Tibial artery (tissue), 4 donors: ENCODE measurements at regions of chr14 and their contacts with region 1.

Region 1: GRCh38 chr14:54010981-54011380 is 54.4 kb upstream of the BMP4 start:
- DNase-seq: no peak
- H3K4me3 ChIP-seq: no peak overlapping the region
- H3K27ac ChIP-seq: no peak overlapping the region
- H3K4me1 ChIP-seq: no peaks in the 10 kb centered on the region
- H3K27me3 ChIP-seq: no peaks in the 10 kb centered on the region
- CTCF ChIP-seq: no peak

Region 2: GRCh38 chr14:53767566-53767965 is 243.4 kb before region 1 on chr14:
- intact Hi-C with region 1: no loop called
- DNase-seq: no peak
- H3K4me3 ChIP-seq: no peak overlapping the region
- H3K27ac ChIP-seq: no peak overlapping the region
- H3K4me1 ChIP-seq: no peaks in the 10 kb centered on the region
- H3K27me3 ChIP-seq: no peaks in the 10 kb centered on the region
- CTCF ChIP-seq: no peak

Region 3: DNA sequence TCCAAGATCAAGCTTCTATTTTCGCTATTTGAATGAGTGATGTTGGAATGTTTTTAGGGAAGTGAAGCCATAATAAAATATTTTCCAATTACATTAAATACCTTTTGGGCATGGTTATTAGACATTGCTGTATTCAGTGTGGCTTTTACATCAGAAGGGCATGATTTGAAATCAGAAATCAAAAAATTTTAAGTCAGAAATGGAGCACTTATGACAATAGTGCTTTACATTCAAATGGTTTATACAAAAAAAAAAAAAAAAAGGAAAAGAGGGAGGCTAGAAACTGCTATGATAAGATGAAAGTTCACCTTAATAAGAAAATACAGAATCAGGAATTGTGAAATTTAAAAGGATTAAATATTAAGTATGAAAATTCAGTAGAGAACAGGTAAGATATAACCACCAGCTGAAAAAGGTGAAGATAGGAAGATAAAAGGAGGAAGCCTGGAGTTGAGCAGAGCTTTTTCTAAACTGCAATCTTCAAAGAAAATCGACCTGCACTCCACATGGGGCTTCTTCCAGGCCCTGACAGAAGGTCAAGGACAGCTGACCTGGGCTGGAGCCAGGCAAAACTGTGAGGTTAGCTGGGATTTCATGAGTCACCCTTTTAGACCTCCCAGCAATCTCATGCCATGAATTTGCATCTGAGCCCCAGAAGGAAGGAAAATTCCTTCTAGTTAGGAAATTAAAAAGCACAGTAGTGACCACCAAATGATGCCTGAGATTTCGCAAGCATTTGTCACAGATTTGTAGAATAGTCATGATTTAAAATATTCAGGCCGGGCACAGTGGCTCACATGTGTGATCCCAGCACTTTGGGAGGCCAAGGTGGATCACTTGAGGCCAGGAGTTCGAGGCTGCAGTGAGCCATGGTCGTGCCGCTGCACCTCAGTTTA is 31.0 kb before region 1 on chr14:
- intact Hi-C with region 1: loop called (anchors 5 kb)
- DNase-seq: peak in 1 of 2 donors; percentile 28
- H3K4me3 ChIP-seq: no peak overlapping the region
- H3K27ac ChIP-seq: no peak overlapping the region
- H3K4me1 ChIP-seq: no peaks in the 10 kb centered on the region
- H3K27me3 ChIP-seq: no peaks in the 10 kb centered on the region
- CTCF ChIP-seq: no peak

Region 4: DNA sequence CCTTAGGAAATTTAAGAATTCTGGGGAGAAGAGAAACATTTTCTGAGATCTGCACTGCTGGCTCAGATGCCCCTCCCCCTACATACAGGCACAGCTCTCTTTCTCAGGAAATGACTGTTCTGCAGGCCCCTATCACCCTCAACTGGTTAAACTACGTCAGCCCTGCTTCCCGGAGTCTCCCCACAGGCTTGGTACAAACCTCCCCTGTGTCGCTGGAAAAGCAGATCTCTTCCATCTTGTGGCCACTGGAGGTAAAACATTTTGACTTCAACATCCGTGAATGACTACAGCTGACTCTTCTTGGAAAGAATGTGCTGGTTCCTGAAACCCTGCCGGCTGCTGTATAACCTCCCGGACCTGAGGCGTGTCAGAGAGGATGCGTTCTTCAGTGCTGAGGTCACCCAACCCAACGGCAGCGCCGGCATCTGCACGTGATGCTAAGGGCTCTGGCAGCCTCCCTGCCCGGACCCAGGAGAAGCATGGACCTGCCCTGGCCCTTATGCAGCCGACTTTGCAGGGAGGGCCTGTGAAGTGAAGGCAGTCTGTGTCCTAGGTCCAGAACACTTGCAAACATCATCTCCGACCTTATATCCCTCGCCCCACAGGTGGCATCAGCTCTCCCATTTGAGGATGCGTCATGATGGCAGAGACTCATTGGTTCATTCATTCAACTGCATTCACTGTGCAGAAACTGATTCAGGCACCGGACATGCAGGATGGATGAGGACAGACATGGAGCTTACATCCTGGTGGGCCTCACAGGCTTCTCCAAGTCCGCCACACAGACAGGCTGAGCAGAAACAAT is 762.4 kb after region 1 on chr14:
- intact Hi-C with region 1: no loop called
- DNase-seq: peak; percentile 85 to 92
- H3K4me3 ChIP-seq: peak overlapping the region in 1 of 2 donors; percentile 8
- H3K27ac ChIP-seq: peak overlapping the region; percentile 84 to 88
- H3K4me1 ChIP-seq: peaks cover 0 to 88% (median 56%) of the 10 kb centered on the region in 4 donors
- H3K27me3 ChIP-seq: no peaks in the 10 kb centered on the region
- CTCF ChIP-seq: peak; percentile 63 to 90